CD4-positive, alpha-beta memory T cell (primary cell): ENCODE measurements at regions of chr3 and their contacts with region 1.

Region 1: GRCh38 chr3:185585859-185586685 is at the start of gene SENP2:
- DNase-seq: peak; percentile 99 to 100 (median 100)
- H3K4me3 ChIP-seq: peak within 1 kb of the TSS; percentile 57 to 78
- H3K4me3 Mint-ChIP-seq: peak within 1 kb of the TSS; percentile 83 to 94 (median 90)
- H3K27ac ChIP-seq: peak within 1 kb of the TSS; percentile 95
- H3K27ac Mint-ChIP-seq: peak within 1 kb of the TSS; percentile 93 to 98 (median 96)
- H3K4me1 ChIP-seq: peaks cover 27% of the 10 kb centered on the region
- H3K4me1 Mint-ChIP-seq: peaks cover 18 to 32% (median 24%) of the 10 kb centered on the region in 4 donors
- H3K27me3 ChIP-seq: no peaks in the 10 kb centered on the region
- H3K27me3 Mint-ChIP-seq: no peaks in the 10 kb centered on the region
- total RNA-seq, gene SENP2: 46.0 to 54.3 TPM

Region 2: GRCh38 chr3:184811999-184812661 is 773.9 kb before region 1 on chr3 and contains the start of gene VPS8:
- CTCF ChIA-PET with region 1: no interaction called
- POLR2A ChIA-PET with region 1: no interaction called
- intact Hi-C with region 1: loop called (anchors 5 kb)
- DNase-seq: peak; percentile 96 to 97 (median 96)
- H3K4me3 ChIP-seq: peak within 1 kb of the TSS; percentile 83 to 88
- H3K4me3 Mint-ChIP-seq: peak within 1 kb of the TSS; percentile 96 to 99 (median 98)
- H3K27ac ChIP-seq: peak within 1 kb of the TSS; percentile 79
- H3K27ac Mint-ChIP-seq: peak within 1 kb of the TSS; percentile 93 to 99 (median 97)
- H3K4me1 ChIP-seq: peaks cover 46% of the 10 kb centered on the region
- H3K4me1 Mint-ChIP-seq: peaks cover 31 to 54% (median 44%) of the 10 kb centered on the region in 4 donors
- H3K27me3 ChIP-seq: no peaks in the 10 kb centered on the region
- H3K27me3 Mint-ChIP-seq: peaks cover 4 to 5% of the 10 kb centered on the region in 2 donors
- total RNA-seq, gene VPS8: 83.9 to 85.9 TPM

Region 3: DNA sequence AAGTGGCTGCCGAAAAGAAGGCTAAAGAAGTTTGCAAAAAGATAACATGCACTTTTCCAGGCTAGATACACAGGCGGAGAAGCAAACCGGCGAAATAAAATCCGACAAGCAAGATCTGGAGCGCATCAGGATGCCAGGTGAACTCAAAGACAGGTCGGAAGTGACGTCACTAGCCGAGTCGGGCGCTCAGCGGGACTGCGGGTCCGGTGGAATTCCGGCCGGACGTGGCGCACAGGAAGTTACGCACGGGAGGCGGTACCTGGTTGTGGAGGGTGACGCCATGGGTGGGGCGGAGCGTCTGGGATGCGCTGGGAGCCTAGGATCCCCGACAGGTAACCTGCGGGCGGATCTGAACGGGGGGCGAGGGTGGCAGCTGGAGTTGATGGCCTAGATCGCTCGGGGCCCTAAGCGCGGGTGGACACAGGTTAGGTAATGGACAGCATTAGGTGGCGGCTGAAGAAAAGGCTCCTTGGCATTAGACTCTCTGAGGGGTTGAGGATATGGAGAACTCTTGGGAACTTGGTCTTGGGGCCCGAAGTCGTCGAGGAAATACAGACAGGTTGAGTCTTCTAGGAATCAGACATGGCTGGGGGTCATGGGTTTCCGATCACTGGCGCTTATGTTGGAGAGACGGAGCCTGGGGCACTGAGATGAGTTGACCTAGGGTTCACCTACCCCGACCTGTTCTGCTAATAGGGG is 303.2 kb before region 1 on chr3:
- CTCF ChIA-PET with region 1: no interaction called
- POLR2A ChIA-PET with region 1: no interaction called
- intact Hi-C with region 1: loop called (anchors 2 kb)
- DNase-seq: peak; percentile 88 to 95 (median 91)
- H3K4me3 ChIP-seq: peak overlapping the region; percentile 67
- H3K4me3 Mint-ChIP-seq: peak overlapping the region; percentile 91 to 98 (median 94)
- H3K27ac ChIP-seq: peak overlapping the region; percentile 60
- H3K27ac Mint-ChIP-seq: peak overlapping the region; percentile 91 to 99 (median 97)
- H3K4me1 ChIP-seq: peaks cover 11% of the 10 kb centered on the region
- H3K4me1 Mint-ChIP-seq: peaks cover 8 to 27% (median 14%) of the 10 kb centered on the region in 4 donors
- H3K27me3 ChIP-seq: no peaks in the 10 kb centered on the region
- H3K27me3 Mint-ChIP-seq: peaks cover 12 to 14% of the 10 kb centered on the region in 2 donors

Region 4: GRCh38 chr3:185498503-185499396 is 87.3 kb before region 1 on chr3 and contains the start of gene TMEM41A:
- CTCF ChIA-PET with region 1: no interaction called
- POLR2A ChIA-PET with region 1: interaction called, 13 read pairs
- intact Hi-C with region 1: loop called (anchors 1 kb)
- DNase-seq: peak; percentile 81 to 88 (median 87)
- H3K4me3 ChIP-seq: peak within 1 kb of the TSS; percentile 72 to 86
- H3K4me3 Mint-ChIP-seq: peak within 1 kb of the TSS; percentile 88 to 98 (median 94)
- H3K27ac ChIP-seq: peak within 1 kb of the TSS; percentile 64
- H3K27ac Mint-ChIP-seq: peak within 1 kb of the TSS; percentile 85 to 94 (median 91)
- H3K4me1 ChIP-seq: peaks cover 23% of the 10 kb centered on the region
- H3K4me1 Mint-ChIP-seq: peaks cover 4 to 38% (median 21%) of the 10 kb centered on the region in 4 donors
- H3K27me3 ChIP-seq: no peaks in the 10 kb centered on the region
- H3K27me3 Mint-ChIP-seq: no peaks in the 10 kb centered on the region
- total RNA-seq, gene TMEM41A: 26.5 to 28.0 TPM

Region 5: DNA sequence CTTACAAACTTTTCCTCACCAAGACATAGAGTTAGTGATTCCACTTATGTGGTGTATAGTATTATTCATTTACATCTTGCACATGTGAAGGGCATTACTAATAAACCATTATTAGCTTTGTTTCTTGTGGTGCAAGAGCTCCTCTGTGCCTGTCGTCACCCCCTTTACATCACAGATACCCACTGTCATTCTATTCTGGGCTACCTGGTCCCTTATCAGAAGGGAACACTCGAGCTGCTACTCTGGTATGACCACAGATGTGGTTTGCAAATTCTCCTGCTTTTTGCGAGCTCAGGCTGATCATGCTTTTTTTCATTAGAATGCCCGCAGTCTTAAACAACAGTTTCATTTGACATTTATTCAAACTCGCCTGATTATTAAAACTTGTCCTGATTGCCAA is 13.9 kb before region 1 on chr3:
- CTCF ChIA-PET with region 1: interaction called, 42 read pairs
- POLR2A ChIA-PET with region 1: interaction called, 3 read pairs
- intact Hi-C with region 1: no loop called
- DNase-seq: no peak
- H3K4me3 ChIP-seq: no peak overlapping the region
- H3K4me3 Mint-ChIP-seq: no peak overlapping the region
- H3K27ac ChIP-seq: no peak overlapping the region
- H3K27ac Mint-ChIP-seq: no peak overlapping the region
- H3K4me1 ChIP-seq: no peaks in the 10 kb centered on the region
- H3K4me1 Mint-ChIP-seq: peaks cover 5 to 7% (median 6%) of the 10 kb centered on the region in 4 donors
- H3K27me3 ChIP-seq: no peaks in the 10 kb centered on the region
- H3K27me3 Mint-ChIP-seq: peaks cover 0 to 3% of the 10 kb centered on the region in 2 donors

Region 6: GRCh38 chr3:185613016-185613415 is 26.9 kb after region 1 on chr3:
- CTCF ChIA-PET with region 1: no interaction called
- POLR2A ChIA-PET with region 1: interaction called, 16 read pairs
- intact Hi-C with region 1: no loop called
- DNase-seq: no peak
- H3K4me3 ChIP-seq: no peak overlapping the region
- H3K4me3 Mint-ChIP-seq: peak overlapping the region; percentile 63 to 79 (median 68)
- H3K27ac ChIP-seq: peak overlapping the region; percentile 23
- H3K27ac Mint-ChIP-seq: peak overlapping the region; percentile 46 to 91 (median 88)
- H3K4me1 ChIP-seq: peaks cover 4% of the 10 kb centered on the region
- H3K4me1 Mint-ChIP-seq: peaks cover 0 to 5% (median 1%) of the 10 kb centered on the region in 4 donors
- H3K27me3 ChIP-seq: no peaks in the 10 kb centered on the region
- H3K27me3 Mint-ChIP-seq: no peaks in the 10 kb centered on the region

Region 7: DNA sequence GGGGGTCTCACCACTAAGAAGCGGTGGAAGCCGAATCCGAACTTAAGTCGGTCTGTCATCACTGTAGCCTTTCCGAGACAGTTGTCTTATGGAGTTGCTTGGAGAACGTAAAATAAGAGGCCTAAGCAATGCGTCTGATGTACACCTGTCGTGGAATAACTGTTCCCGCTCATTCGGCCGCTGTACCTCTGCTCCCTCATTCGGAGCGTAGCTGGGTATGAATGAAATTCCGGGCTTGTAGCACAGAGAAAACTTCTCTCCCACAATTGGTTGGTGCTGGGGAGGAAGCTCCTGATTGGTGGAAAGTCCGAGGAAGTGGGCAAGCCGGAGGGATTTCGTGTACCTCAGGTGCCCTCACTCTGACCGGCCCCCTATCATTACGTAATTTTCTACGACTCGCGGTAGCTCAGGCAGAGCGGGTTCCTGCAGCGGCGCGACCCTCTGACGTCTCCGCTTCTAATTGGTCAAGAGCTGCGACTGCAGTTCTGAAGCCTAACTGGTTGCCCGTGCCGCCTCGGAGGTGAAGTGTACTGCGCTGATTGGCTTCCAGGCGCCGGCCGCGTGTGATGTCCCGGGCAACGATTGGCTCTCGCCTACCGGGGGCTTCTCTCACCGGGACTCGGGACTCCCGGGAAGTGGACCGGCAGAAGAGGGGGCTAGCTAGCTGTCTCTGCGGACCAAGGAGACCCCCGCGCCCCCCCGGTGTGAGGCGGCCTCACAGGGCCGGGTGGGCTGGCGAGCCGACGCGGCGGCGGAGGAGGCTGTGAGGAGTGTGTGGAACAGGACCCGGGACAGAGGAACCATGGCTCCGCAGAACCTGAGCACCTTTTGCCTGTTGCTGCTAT is 984.2 kb after region 1 on chr3 and contains the start of gene DNAJB11:
- CTCF ChIA-PET with region 1: no interaction called
- POLR2A ChIA-PET with region 1: interaction called, 8 read pairs
- intact Hi-C with region 1: loop called (anchors 1 kb)
- DNase-seq: peak; percentile 96 to 100 (median 99)
- H3K4me3 ChIP-seq: peak within 1 kb of the TSS; percentile 71 to 93
- H3K4me3 Mint-ChIP-seq: peak within 1 kb of the TSS; percentile 89 to 100 (median 94)
- H3K27ac ChIP-seq: peak within 1 kb of the TSS; percentile 91
- H3K27ac Mint-ChIP-seq: peak within 1 kb of the TSS; percentile 95 to 99 (median 98)
- H3K4me1 ChIP-seq: peaks cover 37% of the 10 kb centered on the region
- H3K4me1 Mint-ChIP-seq: peaks cover 30 to 71% (median 45%) of the 10 kb centered on the region in 4 donors
- H3K27me3 ChIP-seq: no peaks in the 10 kb centered on the region
- H3K27me3 Mint-ChIP-seq: no peaks in the 10 kb centered on the region
- total RNA-seq, gene DNAJB11: 34.0 to 38.6 TPM